Esophagus squamous epithelium (tissue), 5 donors: ENCODE measurements at regions of chr17 and their contacts with region 1.

Region 1: GRCh38 chr17:64129764-64130558 is at the start of gene ERN1:
- DNase-seq: peak; percentile 76
- H3K4me3 ChIP-seq: peak within 1 kb of the TSS; percentile 63 to 92 (median 88)
- H3K27ac ChIP-seq: peak within 1 kb of the TSS; percentile 90 to 99 (median 96)
- H3K4me1 ChIP-seq: peaks cover 4 to 60% (median 24%) of the 10 kb centered on the region in 3 donors
- H3K27me3 ChIP-seq: no peaks in the 10 kb centered on the region
- CTCF ChIP-seq: peak in 1 of 6 experiments; percentile 3
- POLR2A ChIP-seq: peak in 3 of 4 donors; percentile 57 to 96 (median 91)
- total RNA-seq, gene ERN1: 9.2 to 19.1 (median 15.1) TPM

Region 2: DNA sequence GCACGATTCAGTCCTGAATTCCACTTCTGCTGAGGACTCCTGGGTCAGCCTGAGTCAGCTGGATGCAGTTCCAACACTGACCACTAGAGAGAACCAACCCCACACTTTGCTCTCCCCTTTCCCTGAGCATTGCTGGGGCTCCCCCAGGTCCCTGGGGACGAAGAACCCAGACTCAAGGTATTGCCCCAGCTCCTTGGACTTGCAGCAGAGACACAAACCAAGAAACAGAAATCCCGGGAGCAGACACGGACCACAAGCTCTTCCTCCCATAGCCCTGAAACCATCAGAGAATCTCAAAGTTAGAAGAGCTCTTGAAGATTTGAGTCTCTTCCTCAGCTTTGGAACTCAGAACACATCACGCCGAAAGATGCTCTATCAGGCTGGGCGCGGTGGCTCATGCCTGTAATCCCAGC is 210.6 kb before region 1 on chr17:
- intact Hi-C with region 1: loop called (anchors 10 kb)
- DNase-seq: no peak
- H3K4me3 ChIP-seq: no peak overlapping the region
- H3K27ac ChIP-seq: no peak overlapping the region
- H3K4me1 ChIP-seq: peaks cover 0 to 5% (median 0%) of the 10 kb centered on the region in 3 donors
- H3K27me3 ChIP-seq: peaks cover 0 to 14% (median 0%) of the 10 kb centered on the region in 4 donors
- CTCF ChIP-seq: peak; percentile 93 to 96 (median 94)
- POLR2A ChIP-seq: no peak

Region 3: GRCh38 chr17:64025732-64026294 is 104.1 kb before region 1 on chr17:
- intact Hi-C with region 1: loop called (anchors 2 kb)
- DNase-seq: peak; percentile 18
- H3K4me3 ChIP-seq: peak overlapping the region in 2 of 4 donors; percentile 21 to 50
- H3K27ac ChIP-seq: peak overlapping the region in 3 of 4 donors; percentile 10 to 52 (median 48)
- H3K4me1 ChIP-seq: peaks cover 0 to 20% (median 4%) of the 10 kb centered on the region in 3 donors
- H3K27me3 ChIP-seq: no peaks in the 10 kb centered on the region
- CTCF ChIP-seq: peak; percentile 86 to 98 (median 90)
- POLR2A ChIP-seq: no peak

Region 4: GRCh38 chr17:64496786-64497564 is 367.0 kb after region 1 on chr17 and contains the start of gene POLG2:
- intact Hi-C with region 1: no loop called
- DNase-seq: peak; percentile 52
- H3K4me3 ChIP-seq: peak within 1 kb of the TSS; percentile 65 to 86 (median 72)
- H3K27ac ChIP-seq: peak within 1 kb of the TSS; percentile 81 to 91 (median 89)
- H3K4me1 ChIP-seq: peaks cover 5 to 80% (median 50%) of the 10 kb centered on the region in 3 donors
- H3K27me3 ChIP-seq: no peaks in the 10 kb centered on the region
- CTCF ChIP-seq: peak; percentile 20 to 63 (median 42)
- POLR2A ChIP-seq: peak in 3 of 4 donors; percentile 23 to 73 (median 58)
- total RNA-seq, gene POLG2: 3.9 to 12.0 (median 8.2) TPM